Activated T-helper 1 cell treated with anti-CD3 and anti-CD28 coated beads, Interleukin-12 subunit alpha, Interleukin-12 subunit beta, Interleukin-2, Interleukin-4 antibody, amounts not matched to agents 30 ng/mL and 10 ng/mL and 1 ng/mL, durations not matched to agents 14 hours and 24 hours and 36 hours (primary cell): ENCODE measurements at regions of chr3 and their contacts with region 1.

Region 1: GRCh38 chr3:24154013-24154695 is 209.1 kb downstream of the NR1D2 start:
- DNase-seq: no peak
- H3K4me3 Mint-ChIP-seq: no peak overlapping the region
- H3K27ac Mint-ChIP-seq: peak overlapping the region; percentile 57
- H3K4me1 Mint-ChIP-seq: peaks cover 44% of the 10 kb centered on the region
- H3K27me3 Mint-ChIP-seq: no peaks in the 10 kb centered on the region

Region 2: DNA sequence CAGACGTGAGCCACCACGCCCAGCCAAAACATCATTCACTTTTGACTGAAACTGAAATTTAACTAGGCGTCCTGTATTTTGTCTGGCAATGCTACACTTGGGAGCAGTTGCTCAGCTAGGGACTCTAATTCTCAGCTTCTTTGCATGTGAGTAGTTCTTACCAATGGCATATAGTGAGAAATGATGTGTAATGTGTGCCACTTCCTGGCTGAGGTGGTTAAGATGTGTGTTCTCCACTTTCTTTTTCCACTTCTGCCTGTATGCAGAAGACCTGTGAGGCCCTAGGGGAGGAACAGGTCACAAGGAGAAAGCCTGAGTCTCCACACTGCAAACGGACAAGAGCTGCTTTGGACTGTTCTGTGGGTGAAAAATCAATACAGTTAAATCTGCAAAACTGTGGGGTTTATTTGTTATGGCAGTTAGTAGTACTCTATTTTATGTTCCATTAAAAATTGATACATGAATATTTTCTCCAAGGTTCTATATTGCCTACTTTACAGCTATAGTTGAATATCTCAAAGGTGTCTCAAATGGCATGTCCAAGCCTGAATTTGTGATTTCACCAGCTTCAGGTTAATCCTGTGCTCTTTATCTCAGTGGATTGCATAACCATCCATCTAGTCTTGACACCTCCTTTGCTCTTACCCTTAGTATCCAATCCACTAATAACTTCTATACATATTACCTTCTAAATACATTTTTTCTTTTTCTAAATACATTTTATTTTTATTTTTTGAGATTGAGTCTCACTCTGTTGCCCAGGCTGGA is 149.8 kb before region 1 on chr3:
- intact Hi-C with region 1: loop called (anchors 1 kb)
- DNase-seq: no peak
- H3K4me3 Mint-ChIP-seq: no peak overlapping the region
- H3K27ac Mint-ChIP-seq: no peak overlapping the region
- H3K4me1 Mint-ChIP-seq: peaks cover 6% of the 10 kb centered on the region
- H3K27me3 Mint-ChIP-seq: peaks cover 11% of the 10 kb centered on the region